ENCODE measurements at regions of chr3 and their contacts with region 1.

Region 1: DNA sequence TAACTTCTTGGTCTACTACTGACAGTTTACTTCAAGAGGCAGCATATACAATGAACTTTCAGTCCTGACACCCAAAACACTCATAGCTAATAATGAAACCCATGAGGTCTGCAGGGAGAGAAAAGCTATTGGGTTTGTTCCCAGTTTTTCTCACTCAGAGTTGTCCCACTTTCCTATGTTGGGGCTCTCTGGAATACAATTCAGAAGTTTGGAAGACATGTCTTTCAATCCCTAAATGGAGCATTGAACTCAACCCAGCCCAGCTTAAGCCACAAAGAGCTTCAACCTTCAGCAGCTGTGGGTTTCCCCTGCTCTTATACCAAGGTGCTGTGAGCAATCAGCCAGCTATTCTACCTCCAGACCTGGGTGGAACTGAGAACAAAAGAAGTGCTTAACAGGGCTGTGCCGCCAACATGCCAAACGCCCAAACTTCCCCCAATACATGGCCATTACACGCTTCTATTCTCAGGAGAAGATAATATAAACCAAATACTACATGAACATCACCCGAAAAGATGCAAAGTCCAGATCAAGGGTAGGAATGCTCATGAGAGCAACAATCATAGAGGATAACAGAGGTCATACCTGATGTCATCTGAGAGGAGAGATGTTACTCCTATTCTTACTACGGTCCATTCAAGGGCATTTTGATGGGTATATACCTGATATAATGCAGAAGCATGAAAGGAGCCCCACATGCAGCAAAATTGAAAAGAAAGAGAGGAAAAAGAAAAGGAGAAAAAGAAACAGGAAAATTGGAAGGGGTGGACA is 131.2 kb upstream of the TGFBR2 start:
- DNase-seq: peak; percentile 25
- ATAC-seq: peak; percentile 94
- H3K4me3 ChIP-seq: no peak overlapping the region
- H3K27ac ChIP-seq: no peak overlapping the region
- H3K4me1 ChIP-seq: peaks cover 18% of the 10 kb centered on the region
- H3K27me3 ChIP-seq: no peaks in the 10 kb centered on the region
- CTCF ChIP-seq: no peak
- EP300 ChIP-seq: no peak
- POLR2A ChIP-seq: no peak
- RAD21 ChIP-seq: no peak

Region 2: GRCh38 chr3:30502742-30503073 is 27.5 kb after region 1 on chr3:
- CTCF ChIA-PET with region 1: no interaction called
- POLR2A ChIA-PET with region 1: interaction called, 4 read pairs
- RAD21 ChIA-PET with region 1: interaction called, 12 read pairs
- SMC1A ChIA-PET with region 1: interaction called, 10 read pairs
- in situ Hi-C with region 1: no loop called
- intact Hi-C with region 1: loop called (anchors 2 kb)
- DNase-seq: peak; percentile 12
- ATAC-seq: peak; percentile 40
- H3K4me3 ChIP-seq: no peak overlapping the region
- H3K27ac ChIP-seq: no peak overlapping the region
- H3K4me1 ChIP-seq: peaks cover 28% of the 10 kb centered on the region
- H3K27me3 ChIP-seq: no peaks in the 10 kb centered on the region
- CTCF ChIP-seq: no peak
- EP300 ChIP-seq: no peak
- POLR2A ChIP-seq: no peak
- RAD21 ChIP-seq: no peak